ENCODE measurements at regions of chr5 and their contacts with region 1.

Region 1: GRCh38 chr5:172199446-172199845 is 5.5 kb downstream of the EFCAB9 start:
- DNase-seq: no peak
- ATAC-seq: no peak
- H3K4me3 ChIP-seq: no peak overlapping the region
- H3K4me3 Mint-ChIP-seq: no peak overlapping the region
- H3K27ac ChIP-seq: no peak overlapping the region
- H3K27ac Mint-ChIP-seq: no peak overlapping the region
- H3K4me1 ChIP-seq: no peaks in the 10 kb centered on the region
- H3K4me1 Mint-ChIP-seq: no peaks in the 10 kb centered on the region
- H3K27me3 ChIP-seq: peaks cover 0 to 12% of the 10 kb centered on the region in 2 experiments
- H3K27me3 Mint-ChIP-seq: peaks cover 0 to 7% of the 10 kb centered on the region in 2 donors

Region 2: GRCh38 chr5:171874234-171874633 is 325.2 kb before region 1 on chr5:
- CTCF ChIA-PET with region 1: no interaction called
- POLR2A ChIA-PET with region 1: no interaction called
- DNase-seq: no peak
- ATAC-seq: no peak
- H3K4me3 ChIP-seq: no peak overlapping the region
- H3K4me3 Mint-ChIP-seq: no peak overlapping the region
- H3K27ac ChIP-seq: no peak overlapping the region
- H3K27ac Mint-ChIP-seq: no peak overlapping the region
- H3K4me1 ChIP-seq: no peaks in the 10 kb centered on the region
- H3K4me1 Mint-ChIP-seq: peaks cover 0 to 6% (median 0%) of the 10 kb centered on the region in 3 donors
- H3K27me3 ChIP-seq: no peaks in the 10 kb centered on the region
- H3K27me3 Mint-ChIP-seq: no peaks in the 10 kb centered on the region

Region 3: DNA sequence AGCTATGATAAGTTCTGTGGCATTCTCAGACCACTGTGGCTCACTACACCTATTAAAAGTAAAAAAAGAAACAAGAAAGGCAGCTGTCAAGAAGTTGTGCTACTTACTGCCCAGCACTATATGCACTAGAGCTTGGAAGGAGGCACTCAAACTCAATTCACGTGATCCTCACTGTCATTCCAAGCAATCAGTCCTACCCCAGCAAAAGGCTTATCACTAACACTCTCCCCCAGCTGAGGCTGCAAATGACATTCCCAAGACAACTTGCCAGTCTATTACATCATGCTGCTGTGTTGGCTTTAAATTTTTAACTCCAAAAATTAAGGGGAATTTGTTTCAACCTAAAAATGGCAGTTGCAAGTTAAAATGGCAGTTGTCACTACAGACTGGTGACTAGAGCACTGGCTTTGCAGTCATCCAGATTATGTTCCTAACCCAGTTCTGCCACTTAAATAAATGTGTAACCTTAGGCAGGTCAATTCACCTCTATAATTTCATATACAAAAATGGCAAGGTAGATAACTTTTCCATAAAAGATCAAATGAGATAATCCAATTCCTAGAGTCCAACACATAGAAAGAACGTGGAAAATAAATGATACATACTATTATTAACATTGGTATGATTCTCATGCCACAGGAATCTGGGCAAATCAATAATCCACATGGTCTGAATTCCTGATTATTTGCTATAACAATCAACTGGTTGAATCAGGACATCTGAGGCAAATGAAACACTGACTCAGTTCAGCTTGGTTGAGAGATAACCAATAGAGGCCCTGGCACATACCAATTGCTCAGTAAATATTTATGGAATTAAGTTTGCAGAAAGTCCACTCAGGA is 245.4 kb before region 1 on chr5:
- CTCF ChIA-PET with region 1: interaction called in 1 of 2 experiments, 11 read pairs
- POLR2A ChIA-PET with region 1: no interaction called
- DNase-seq: no peak
- ATAC-seq: no peak
- H3K4me3 ChIP-seq: no peak overlapping the region
- H3K4me3 Mint-ChIP-seq: no peak overlapping the region
- H3K27ac ChIP-seq: no peak overlapping the region
- H3K27ac Mint-ChIP-seq: no peak overlapping the region
- H3K4me1 ChIP-seq: peaks cover 15 to 16% of the 10 kb centered on the region in 2 experiments
- H3K4me1 Mint-ChIP-seq: peaks cover 59 to 68% (median 65%) of the 10 kb centered on the region in 3 donors
- H3K27me3 ChIP-seq: no peaks in the 10 kb centered on the region
- H3K27me3 Mint-ChIP-seq: no peaks in the 10 kb centered on the region

Measured in T-cell (primary cell).